ENCODE measurements at regions of chr2 and their contacts with region 1.

Region 1: DNA sequence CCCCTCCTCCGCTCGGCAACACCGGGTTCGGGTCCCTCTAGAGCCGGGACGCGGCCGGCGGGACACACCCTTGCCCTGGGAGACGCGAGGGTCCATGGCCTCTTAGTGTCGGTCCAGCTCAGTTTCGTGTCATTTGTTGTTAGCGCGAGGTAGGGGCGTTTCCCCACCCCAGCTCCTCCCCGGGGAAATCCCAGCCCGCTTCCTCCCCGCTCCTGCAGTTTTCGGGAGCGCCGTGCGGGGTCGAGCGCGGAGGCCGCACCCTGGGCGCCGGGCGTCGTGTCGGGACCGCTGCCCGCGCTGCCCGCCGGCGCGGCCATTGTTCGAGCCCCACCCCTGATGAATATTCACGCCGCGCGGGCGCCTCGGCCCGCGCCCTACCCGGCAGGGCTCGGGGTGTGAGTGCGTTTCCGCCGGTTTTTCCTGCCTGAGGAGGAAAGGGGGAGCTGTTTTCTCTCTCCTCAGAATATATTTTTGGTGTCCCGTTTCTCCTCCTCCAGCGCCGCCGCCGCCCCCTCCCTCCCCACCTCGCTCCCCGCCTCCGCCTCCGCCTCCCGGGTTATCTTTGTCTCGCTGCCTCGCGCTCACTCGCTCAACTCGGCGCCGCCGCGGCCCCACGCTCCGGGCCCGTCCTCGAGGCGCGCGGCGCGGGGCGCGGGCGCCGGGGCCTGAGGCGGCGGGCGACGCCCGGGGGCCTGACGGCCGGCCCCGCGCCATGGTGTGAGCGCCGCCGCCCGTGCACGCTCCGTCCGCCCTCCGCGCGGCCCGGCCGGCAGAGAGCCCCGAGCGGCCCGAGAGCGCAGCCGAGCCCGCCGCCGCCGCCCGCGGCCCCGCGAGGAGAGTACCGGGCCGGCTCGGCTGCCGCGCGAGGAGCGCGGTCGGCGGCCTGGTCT is at the start of gene MAP4K4:
- DNase-seq: peak; percentile 78
- ATAC-seq: peak; percentile 68
- H3K4me3 Mint-ChIP-seq: peak within 1 kb of the TSS; percentile 90
- H3K27ac Mint-ChIP-seq: peak within 1 kb of the TSS; percentile 93
- H3K4me1 Mint-ChIP-seq: peaks cover 21% of the 10 kb centered on the region
- H3K27me3 Mint-ChIP-seq: peaks cover 2% of the 10 kb centered on the region
- total RNA-seq, gene MAP4K4: 79.8 to 84.5 TPM

Region 2: DNA sequence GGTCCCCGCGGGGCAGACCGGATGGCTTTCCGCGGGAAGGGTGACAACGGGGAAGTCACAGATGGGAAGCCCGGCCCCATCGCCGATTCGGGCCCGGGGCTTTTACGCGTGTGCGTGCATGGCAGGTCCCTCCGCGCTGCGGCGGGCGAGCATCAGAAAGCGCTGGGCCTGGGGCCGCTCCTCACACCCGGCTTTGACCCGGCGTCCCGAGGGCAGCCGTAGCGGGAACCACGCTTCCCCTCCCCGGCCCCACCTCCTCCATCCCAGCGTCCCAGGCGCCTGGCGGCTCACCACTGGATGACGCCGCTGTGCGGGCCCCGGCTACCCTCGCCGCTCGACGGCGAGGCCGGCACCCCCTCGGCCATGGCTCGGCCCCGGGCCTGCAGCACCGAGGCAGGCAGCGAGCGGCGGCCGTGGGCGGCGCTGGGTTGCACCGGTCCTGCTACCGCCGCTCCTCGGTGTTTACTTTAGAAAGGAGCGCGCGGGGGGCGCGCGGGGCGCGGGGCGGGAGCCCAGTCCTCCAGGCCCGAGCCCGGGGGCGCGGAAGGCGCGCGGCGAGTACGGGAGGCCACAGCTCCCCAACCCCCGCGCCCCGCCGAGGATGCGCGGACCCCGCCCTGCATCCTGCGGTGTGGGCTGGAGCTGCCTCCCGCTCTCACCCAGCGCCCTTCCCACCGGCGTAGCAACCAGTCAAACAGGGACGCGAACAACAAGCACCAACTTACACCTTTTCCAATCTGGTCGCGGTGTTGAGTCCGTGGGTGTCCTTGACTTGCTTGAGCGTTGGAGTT is 223.3 kb before region 1 on chr2:
- POLR2A ChIA-PET with region 1: interaction called, 14 read pairs
- DNase-seq: peak; percentile 74
- ATAC-seq: peak; percentile 57
- H3K4me3 Mint-ChIP-seq: peak overlapping the region; percentile 84
- H3K27ac Mint-ChIP-seq: peak overlapping the region; percentile 95
- H3K4me1 Mint-ChIP-seq: peaks cover 39% of the 10 kb centered on the region
- H3K27me3 Mint-ChIP-seq: no peaks in the 10 kb centered on the region

Region 3: DNA sequence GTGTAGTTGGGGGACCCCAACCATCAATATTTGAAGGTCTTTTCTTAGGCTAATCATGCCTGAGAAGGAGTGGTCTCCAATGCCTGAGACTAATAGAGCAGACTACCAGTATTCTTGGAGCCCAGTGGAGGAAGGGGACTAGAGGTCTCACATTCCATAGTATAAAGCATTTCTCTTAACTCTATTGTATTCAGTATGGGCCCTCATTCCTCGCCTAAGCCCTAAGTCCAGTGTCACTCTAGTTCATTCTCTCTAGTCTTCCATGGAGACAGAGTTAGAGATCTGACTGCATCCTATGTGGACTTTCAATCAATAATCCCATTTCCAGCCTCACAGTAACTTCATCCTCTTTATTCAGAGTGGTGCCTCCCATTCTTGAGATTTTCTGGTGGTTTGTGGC is 29.5 kb before region 1 on chr2:
- POLR2A ChIA-PET with region 1: no interaction called
- DNase-seq: no peak
- ATAC-seq: no peak
- H3K4me3 Mint-ChIP-seq: no peak overlapping the region
- H3K27ac Mint-ChIP-seq: no peak overlapping the region
- H3K4me1 Mint-ChIP-seq: no peaks in the 10 kb centered on the region
- H3K27me3 Mint-ChIP-seq: no peaks in the 10 kb centered on the region

Region 4: GRCh38 chr2:101717071-101717845 is 19.9 kb after region 1 on chr2:
- POLR2A ChIA-PET with region 1: interaction called, 22 read pairs
- DNase-seq: no peak
- ATAC-seq: peak; percentile 61
- H3K4me3 Mint-ChIP-seq: peak overlapping the region; percentile 69
- H3K27ac Mint-ChIP-seq: peak overlapping the region; percentile 95
- H3K4me1 Mint-ChIP-seq: peaks cover 42% of the 10 kb centered on the region
- H3K27me3 Mint-ChIP-seq: no peaks in the 10 kb centered on the region

Region 5: GRCh38 chr2:101729521-101730190 is 32.3 kb after region 1 on chr2:
- POLR2A ChIA-PET with region 1: interaction called, 13 read pairs
- DNase-seq: no peak
- ATAC-seq: peak; percentile 76
- H3K4me3 Mint-ChIP-seq: peak overlapping the region; percentile 66
- H3K27ac Mint-ChIP-seq: peak overlapping the region; percentile 62
- H3K4me1 Mint-ChIP-seq: peaks cover 54% of the 10 kb centered on the region
- H3K27me3 Mint-ChIP-seq: no peaks in the 10 kb centered on the region